ENCODE measurements at regions of chr14 and their contacts with region 1.

Region 1: GRCh38 chr14:24135834-24136542 is at the start of gene PSME1:
- DNase-seq: peak; percentile 91 to 95 (median 93)
- H3K4me3 ChIP-seq: peak within 1 kb of the TSS; percentile 73
- H3K4me3 Mint-ChIP-seq: peak within 1 kb of the TSS; percentile 89 to 96 (median 92)
- H3K27ac ChIP-seq: peak within 1 kb of the TSS; percentile 72
- H3K27ac Mint-ChIP-seq: peak within 1 kb of the TSS; percentile 87 to 97 (median 95)
- H3K4me1 ChIP-seq: peaks cover 47% of the 10 kb centered on the region
- H3K4me1 Mint-ChIP-seq: peaks cover 56 to 67% (median 60%) of the 10 kb centered on the region in 3 donors
- H3K27me3 ChIP-seq: no peaks in the 10 kb centered on the region
- H3K27me3 Mint-ChIP-seq: no peaks in the 10 kb centered on the region
- total RNA-seq, gene PSME1: 343 to 347 TPM

Region 2: GRCh38 chr14:22589096-22589839 is 1546.7 kb before region 1 on chr14 and contains the start of gene DAD1:
- CTCF ChIA-PET with region 1: no interaction called
- POLR2A ChIA-PET with region 1: no interaction called
- DNase-seq: peak; percentile 98 to 100 (median 100)
- H3K4me3 ChIP-seq: peak within 1 kb of the TSS; percentile 90
- H3K4me3 Mint-ChIP-seq: peak within 1 kb of the TSS; percentile 92 to 99 (median 97)
- H3K27ac ChIP-seq: peak within 1 kb of the TSS; percentile 98
- H3K27ac Mint-ChIP-seq: peak within 1 kb of the TSS; percentile 95 to 100 (median 100)
- H3K4me1 ChIP-seq: peaks cover 45% of the 10 kb centered on the region
- H3K4me1 Mint-ChIP-seq: peaks cover 52 to 61% (median 57%) of the 10 kb centered on the region in 3 donors
- H3K27me3 ChIP-seq: no peaks in the 10 kb centered on the region
- H3K27me3 Mint-ChIP-seq: peaks cover 4% of the 10 kb centered on the region in 2 donors
- total RNA-seq, gene DAD1: 329 to 353 TPM

Region 3: DNA sequence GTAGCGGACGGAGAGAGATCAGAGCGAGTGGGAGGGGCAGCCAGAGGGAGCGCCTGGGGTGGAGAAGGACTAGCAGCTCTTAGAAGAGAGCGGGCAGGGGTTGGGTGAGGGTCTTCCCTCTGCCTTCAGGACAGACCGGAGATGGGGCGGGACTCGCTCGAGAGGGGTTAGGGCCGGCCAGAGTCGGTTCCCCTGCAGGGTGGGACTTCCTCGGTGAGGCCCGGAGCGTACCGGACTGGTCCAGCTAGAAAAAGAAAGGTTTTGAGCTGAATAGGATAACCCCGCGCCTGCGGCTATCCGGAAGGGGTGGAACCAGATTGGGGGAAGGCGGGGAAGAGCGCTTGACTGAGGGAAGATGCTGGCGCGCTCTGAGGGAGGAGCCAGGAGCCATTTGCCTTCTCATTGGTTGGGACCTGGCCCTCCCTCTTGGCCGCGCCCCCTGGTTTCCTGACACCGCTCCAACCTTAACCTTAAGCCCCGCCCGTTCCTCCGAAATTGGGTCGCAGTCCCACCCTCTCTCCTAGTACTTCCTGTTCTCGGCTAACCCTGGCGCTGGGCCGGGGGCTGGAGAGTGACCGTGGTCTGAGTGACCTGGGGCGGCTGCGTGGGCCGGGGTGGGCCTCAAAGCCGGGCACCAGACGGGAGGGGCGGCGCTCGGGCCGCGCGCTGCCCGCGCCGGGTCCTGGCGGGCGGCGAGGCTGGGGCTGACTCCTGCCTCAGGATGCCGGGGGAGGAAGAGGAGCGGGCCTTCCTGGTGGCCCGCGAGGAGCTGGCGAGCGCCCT is 11.2 kb after region 1 on chr14 and contains the start of gene RNF31:
- CTCF ChIA-PET with region 1: interaction called, 29 read pairs
- POLR2A ChIA-PET with region 1: interaction called, 36 read pairs
- DNase-seq: peak; percentile 96 to 98 (median 97)
- H3K4me3 ChIP-seq: peak within 1 kb of the TSS; percentile 99
- H3K4me3 Mint-ChIP-seq: peak within 1 kb of the TSS; percentile 86 to 100 (median 98)
- H3K27ac ChIP-seq: peak within 1 kb of the TSS; percentile 78
- H3K27ac Mint-ChIP-seq: peak within 1 kb of the TSS; percentile 76 to 99 (median 96)
- H3K4me1 ChIP-seq: peaks cover 53% of the 10 kb centered on the region
- H3K4me1 Mint-ChIP-seq: peaks cover 45 to 70% (median 68%) of the 10 kb centered on the region in 3 donors
- H3K27me3 ChIP-seq: no peaks in the 10 kb centered on the region
- H3K27me3 Mint-ChIP-seq: no peaks in the 10 kb centered on the region
- total RNA-seq, gene RNF31: 85.9 TPM